ENCODE measurements at regions of chr16 and their contacts with region 1.

Region 1: GRCh38 chr16:3530371-3530914 is 29.6 kb downstream of the CLUAP1 start:
- DNase-seq: no peak
- H3K4me3 ChIP-seq: no peak overlapping the region
- H3K27ac ChIP-seq: no peak overlapping the region
- H3K4me1 ChIP-seq: peaks cover 25% of the 10 kb centered on the region
- CTCF ChIP-seq: no peak

Region 2: DNA sequence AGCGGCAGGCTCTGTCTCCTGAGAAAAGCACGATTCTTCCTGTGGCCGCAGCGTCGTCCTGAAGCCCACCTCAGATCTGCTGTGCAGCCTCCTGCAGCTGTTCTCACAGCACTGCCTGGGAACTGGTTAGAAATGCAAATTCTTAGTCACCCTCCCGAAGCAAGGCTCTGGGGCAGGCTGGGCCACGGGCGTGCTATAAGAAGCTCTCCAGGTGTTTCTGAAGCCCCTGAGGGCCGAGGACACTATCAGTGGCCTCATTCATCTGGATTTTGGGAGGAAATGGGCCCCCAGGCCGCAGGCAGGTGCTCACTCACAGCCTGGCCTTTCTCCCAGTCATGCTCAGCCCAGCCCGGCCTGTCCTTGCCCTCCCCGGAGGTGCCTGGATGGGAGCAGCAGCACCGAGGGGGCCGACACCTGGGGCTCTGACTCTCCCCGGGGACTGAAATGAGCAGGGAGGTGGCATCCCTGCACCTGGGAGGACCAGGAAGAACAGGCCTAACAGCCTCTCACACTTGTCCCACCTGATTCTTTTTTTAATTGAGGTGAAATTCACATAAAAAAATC is 57.2 kb after region 1 on chr16:
- CTCF ChIA-PET with region 1: no interaction called
- POLR2A ChIA-PET with region 1: no interaction called
- intact Hi-C with region 1: loop called (anchors 5 kb)
- DNase-seq: peak; percentile 94
- H3K4me3 ChIP-seq: peak overlapping the region; percentile 46
- H3K27ac ChIP-seq: peak overlapping the region; percentile 95
- H3K4me1 ChIP-seq: peaks cover 40% of the 10 kb centered on the region
- CTCF ChIP-seq: no peak

Region 3: GRCh38 chr16:3611146-3611975 is 80.9 kb after region 1 on chr16 and contains the start of gene SLX4:
- CTCF ChIA-PET with region 1: no interaction called
- POLR2A ChIA-PET with region 1: no interaction called
- intact Hi-C with region 1: loop called (anchors 2 kb)
- DNase-seq: peak; percentile 97
- H3K4me3 ChIP-seq: peak within 1 kb of the TSS; percentile 88
- H3K27ac ChIP-seq: peak within 1 kb of the TSS; percentile 90
- H3K4me1 ChIP-seq: peaks cover 67% of the 10 kb centered on the region
- CTCF ChIP-seq: no peak
- total RNA-seq, gene SLX4: 13.2 and 13.7 TPM in 2 replicates

Region 4: GRCh38 chr16:3654249-3654991 is 124.0 kb after region 1 on chr16 and contains the start of gene DNASE1:
- CTCF ChIA-PET with region 1: no interaction called
- POLR2A ChIA-PET with region 1: interaction called, 3 read pairs
- intact Hi-C with region 1: loop called (anchors 1 kb)
- DNase-seq: peak; percentile 86
- H3K4me3 ChIP-seq: no peak within 1 kb of the TSS
- H3K27ac ChIP-seq: peak within 1 kb of the TSS; percentile 51
- H3K4me1 ChIP-seq: peaks cover 12% of the 10 kb centered on the region
- CTCF ChIP-seq: peak; percentile 88
- total RNA-seq, gene DNASE1: 38.3 and 45.5 TPM in 2 replicates

Region 5: DNA sequence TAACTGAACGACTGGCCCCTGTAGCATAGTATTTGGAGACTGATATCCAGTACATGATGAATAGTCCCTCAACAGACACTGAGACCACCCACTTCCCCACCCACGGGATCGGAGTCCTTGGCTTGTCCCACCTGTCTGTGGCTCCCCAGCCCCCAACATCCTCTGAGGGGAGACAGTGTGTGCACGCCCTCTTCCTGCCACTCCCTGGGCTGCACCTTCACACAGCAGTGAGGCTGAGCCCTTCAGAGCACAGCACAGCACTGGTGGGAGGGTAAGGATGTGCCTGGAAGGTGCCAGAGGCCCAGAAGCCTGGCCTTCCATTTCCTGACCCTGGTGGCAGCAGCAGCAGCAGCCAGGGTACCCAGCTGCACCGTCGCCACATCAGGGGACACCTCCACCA is 135.1 kb after region 1 on chr16:
- CTCF ChIA-PET with region 1: no interaction called
- POLR2A ChIA-PET with region 1: no interaction called
- intact Hi-C with region 1: loop called (anchors 5 kb)
- DNase-seq: peak; percentile 57
- H3K4me3 ChIP-seq: no peak overlapping the region
- H3K27ac ChIP-seq: no peak overlapping the region
- H3K4me1 ChIP-seq: peaks cover 12% of the 10 kb centered on the region
- CTCF ChIP-seq: peak; percentile 68